ENCODE measurements at regions of chr13 and their contacts with region 1.

Region 1: GRCh38 chr13:110561344-110562035 is at the start of gene RAB20:
- DNase-seq: no peak
- ATAC-seq: peak; percentile 75
- H3K4me3 ChIP-seq: peak within 1 kb of the TSS; percentile 91
- H3K27ac ChIP-seq: peak within 1 kb of the TSS; percentile 71
- H3K4me1 ChIP-seq: peaks cover 2% of the 10 kb centered on the region
- H3K27me3 ChIP-seq: no peaks in the 10 kb centered on the region
- CTCF ChIP-seq: no peak
- EP300 ChIP-seq: no peak
- POLR2A ChIP-seq: peak; percentile 61
- RAD21 ChIP-seq: peak; percentile 7; the same call in 1 of the 2 replicates
- polyA plus RNA-seq, gene RAB20: 0.48 to 2.1 TPM

Region 2: DNA sequence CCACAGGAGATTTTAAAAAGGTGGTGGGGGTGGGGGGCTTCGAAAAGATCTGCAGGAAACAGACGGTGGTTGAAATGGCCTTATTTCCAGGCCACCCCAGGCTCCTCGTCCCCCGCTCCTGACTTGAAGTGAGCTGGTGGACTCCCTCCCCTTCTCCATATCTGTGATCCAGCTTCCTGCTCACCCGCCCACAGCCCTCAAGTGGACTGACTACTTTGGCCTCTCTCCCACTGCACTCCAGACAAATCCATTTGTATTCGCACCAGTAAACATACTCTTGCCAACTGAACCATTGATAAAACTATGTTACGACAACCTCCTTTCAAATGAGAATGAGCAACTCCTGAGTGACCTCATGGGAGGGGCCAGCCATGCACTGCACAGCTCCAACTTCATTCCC is 514.0 kb before region 1 on chr13:
- CTCF ChIA-PET with region 1: no interaction called
- POLR2A ChIA-PET with region 1: no interaction called
- RAD21 ChIA-PET with region 1: no interaction called
- SMC1A ChIA-PET with region 1: no interaction called
- in situ Hi-C with region 1: no loop called
- intact Hi-C with region 1: no loop called
- DNase-seq: no peak
- ATAC-seq: no peak
- H3K4me3 ChIP-seq: no peak overlapping the region
- H3K27ac ChIP-seq: no peak overlapping the region
- H3K4me1 ChIP-seq: no peaks in the 10 kb centered on the region
- H3K27me3 ChIP-seq: no peaks in the 10 kb centered on the region
- CTCF ChIP-seq: no peak
- EP300 ChIP-seq: no peak
- POLR2A ChIP-seq: no peak
- RAD21 ChIP-seq: no peak

Region 3: GRCh38 chr13:110471833-110472162 is 89.7 kb before region 1 on chr13:
- CTCF ChIA-PET with region 1: interaction called, 3 read pairs
- POLR2A ChIA-PET with region 1: interaction called, 7 read pairs
- RAD21 ChIA-PET with region 1: no interaction called
- SMC1A ChIA-PET with region 1: interaction called, 4 read pairs
- in situ Hi-C with region 1: no loop called
- intact Hi-C with region 1: loop called (anchors 5 kb)
- DNase-seq: peak; percentile 87
- ATAC-seq: peak; percentile 96
- H3K4me3 ChIP-seq: peak overlapping the region; percentile 42; the same call in 1 of the 2 replicates
- H3K27ac ChIP-seq: peak overlapping the region; percentile 60
- H3K4me1 ChIP-seq: peaks cover 37% of the 10 kb centered on the region
- H3K27me3 ChIP-seq: no peaks in the 10 kb centered on the region
- CTCF ChIP-seq: no peak
- EP300 ChIP-seq: peak; percentile 100
- POLR2A ChIP-seq: peak; percentile 68
- RAD21 ChIP-seq: peak; percentile 3; the same call in 1 of the 2 replicates

Measured in GM12878 (cell line).